ENCODE measurements at regions of chr7 and their contacts with region 1.

Region 1: DNA sequence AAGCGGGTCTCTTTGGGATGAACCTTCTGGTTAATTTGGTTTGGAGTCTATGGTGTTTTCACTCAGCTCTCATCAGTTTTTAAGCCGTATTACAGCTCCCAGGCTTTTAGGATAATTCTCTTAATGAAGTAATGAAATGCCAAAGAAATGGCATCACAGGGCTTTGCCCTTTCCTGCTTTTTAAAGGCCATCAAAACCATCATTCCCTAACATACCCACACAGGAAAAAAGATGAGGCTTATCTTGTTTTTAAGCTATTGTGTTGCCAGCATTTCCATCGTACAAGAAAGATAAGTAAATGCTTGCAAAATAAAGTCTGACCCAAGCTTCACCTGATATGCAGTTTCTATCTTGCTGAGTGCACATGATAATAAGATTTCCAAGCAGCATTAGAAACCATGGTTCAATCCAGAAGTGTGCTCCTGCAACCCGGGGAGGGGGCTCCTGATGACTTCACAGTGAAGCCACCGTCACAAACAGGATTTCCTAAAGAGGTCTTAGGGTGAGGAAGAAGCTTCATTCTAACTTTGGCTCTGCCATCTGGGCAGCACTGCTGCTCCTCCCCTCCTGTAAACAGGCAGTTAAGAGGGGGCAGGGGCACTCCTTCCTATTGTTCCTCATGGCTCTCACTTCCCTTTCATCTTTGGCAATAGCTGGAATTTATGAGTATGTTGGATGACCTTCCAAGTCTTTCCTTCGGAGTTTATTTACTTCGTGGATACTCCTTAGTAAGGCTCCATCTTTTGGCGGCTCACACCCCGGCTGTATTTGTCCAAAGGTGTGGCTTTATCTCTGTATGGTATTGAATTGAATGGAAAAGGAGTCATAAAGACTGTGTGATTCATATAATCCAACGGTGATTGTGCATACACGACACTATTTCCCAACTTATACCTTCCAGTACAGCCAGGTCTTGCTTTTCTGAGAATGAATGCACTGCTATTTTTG is 55.2 kb upstream of the FAM133B start:
- DNase-seq: peak; percentile 80
- H3K4me3 Mint-ChIP-seq: peak overlapping the region; percentile 7
- H3K27ac Mint-ChIP-seq: peak overlapping the region; percentile 38
- H3K4me1 Mint-ChIP-seq: peaks cover 34% of the 10 kb centered on the region
- H3K27me3 Mint-ChIP-seq: no peaks in the 10 kb centered on the region
- CTCF ChIP-seq: no peak

Region 2: GRCh38 chr7:92633211-92633906 is 12.0 kb before region 1 on chr7:
- CTCF ChIA-PET with region 1: interaction called, 3 read pairs
- POLR2A ChIA-PET with region 1: interaction called, 29 read pairs
- intact Hi-C with region 1: no loop called
- DNase-seq: peak; percentile 90
- H3K4me3 Mint-ChIP-seq: peak overlapping the region; percentile 60
- H3K27ac Mint-ChIP-seq: peak overlapping the region; percentile 70
- H3K4me1 Mint-ChIP-seq: peaks cover 39% of the 10 kb centered on the region
- H3K27me3 Mint-ChIP-seq: no peaks in the 10 kb centered on the region
- CTCF ChIP-seq: no peak